ENCODE measurements at regions of chr9 and their contacts with region 1.

Region 1: GRCh38 chr9:38371495-38371894 is 21.0 kb upstream of the ALDH1B1 start:
- DNase-seq: no peak
- H3K4me3 ChIP-seq: no peak overlapping the region
- H3K27ac ChIP-seq: no peak overlapping the region
- H3K4me1 ChIP-seq: no peaks in the 10 kb centered on the region
- H3K27me3 ChIP-seq: peaks cover 14 to 18% of the 10 kb centered on the region in 2 experiments
- CTCF ChIP-seq: peak in 1 of 2 donors; percentile 4
- POLR2A ChIP-seq: no peak

Region 2: DNA sequence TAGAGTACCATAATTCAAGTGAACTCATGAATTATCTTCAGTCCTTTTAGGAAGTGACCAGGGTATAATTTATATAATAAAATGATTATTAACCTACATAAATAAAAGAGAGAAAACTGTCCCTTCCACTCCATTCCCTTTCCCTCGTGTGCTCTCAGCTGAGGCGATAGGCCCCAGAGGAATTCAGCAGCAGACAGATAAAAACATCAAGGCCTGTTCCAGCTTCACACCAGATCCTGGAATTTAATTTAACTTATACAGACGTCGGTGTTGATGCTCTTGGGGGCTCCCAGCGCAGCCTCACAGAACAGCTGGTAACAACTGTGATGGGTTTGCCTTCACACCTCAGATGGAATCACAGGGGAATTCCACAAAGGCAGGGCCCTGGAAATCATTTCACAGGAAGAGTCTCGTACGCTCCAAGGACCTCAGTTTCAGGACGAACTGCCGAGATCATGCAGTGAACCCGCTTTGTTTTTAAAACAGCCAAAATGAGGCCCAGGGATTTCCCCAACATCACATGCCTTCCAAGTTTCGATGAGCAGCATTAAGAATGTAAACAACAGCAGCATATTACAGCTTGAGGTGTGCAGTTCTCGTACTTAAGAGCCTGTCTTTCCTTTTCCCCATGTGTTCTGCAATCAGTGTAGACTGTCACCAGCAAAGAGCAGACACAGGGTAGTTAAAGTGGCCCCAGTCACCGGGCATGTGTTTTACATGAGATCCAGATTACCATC is 52.6 kb before region 1 on chr9:
- CTCF ChIA-PET with region 1: no interaction called
- POLR2A ChIA-PET with region 1: no interaction called
- dilution Hi-C with region 1: no loop called
- intact Hi-C with region 1: loop called (anchors 10 kb)
- DNase-seq: peak; percentile 7
- H3K4me3 ChIP-seq: no peak overlapping the region
- H3K27ac ChIP-seq: no peak overlapping the region
- H3K4me1 ChIP-seq: no peaks in the 10 kb centered on the region
- H3K27me3 ChIP-seq: peaks cover 4 to 12% of the 10 kb centered on the region in 2 experiments
- CTCF ChIP-seq: no peak
- POLR2A ChIP-seq: no peak

Region 3: DNA sequence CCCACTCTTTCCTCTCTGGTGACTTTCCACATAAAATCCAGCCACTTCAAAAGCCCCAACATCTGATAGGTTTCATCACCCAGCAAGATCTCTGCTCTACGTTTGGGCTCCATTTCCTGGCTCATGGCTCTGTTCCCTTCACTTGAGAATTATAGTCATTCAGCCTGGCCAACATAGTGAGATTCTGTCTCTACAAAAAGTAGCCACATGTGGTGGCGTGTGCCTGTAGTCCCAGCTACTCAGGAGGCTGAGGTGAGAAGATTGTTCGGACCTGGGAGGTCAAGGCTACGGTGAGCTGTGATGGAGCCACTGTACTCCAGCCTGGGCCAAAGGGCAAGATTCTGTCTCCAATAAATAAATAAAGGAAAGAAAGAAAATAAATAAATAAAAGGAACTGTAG is 136.1 kb after region 1 on chr9:
- CTCF ChIA-PET with region 1: no interaction called
- POLR2A ChIA-PET with region 1: no interaction called
- dilution Hi-C with region 1: no loop called
- intact Hi-C with region 1: no loop called
- DNase-seq: no peak
- H3K4me3 ChIP-seq: no peak overlapping the region
- H3K27ac ChIP-seq: no peak overlapping the region
- H3K4me1 ChIP-seq: no peaks in the 10 kb centered on the region
- H3K27me3 ChIP-seq: no peaks in the 10 kb centered on the region
- CTCF ChIP-seq: no peak
- POLR2A ChIP-seq: no peak

Measured in endothelial cell of umbilical vein (primary cell).